ENCODE measurements at regions of chr1 and their contacts with region 1.

Region 1: DNA sequence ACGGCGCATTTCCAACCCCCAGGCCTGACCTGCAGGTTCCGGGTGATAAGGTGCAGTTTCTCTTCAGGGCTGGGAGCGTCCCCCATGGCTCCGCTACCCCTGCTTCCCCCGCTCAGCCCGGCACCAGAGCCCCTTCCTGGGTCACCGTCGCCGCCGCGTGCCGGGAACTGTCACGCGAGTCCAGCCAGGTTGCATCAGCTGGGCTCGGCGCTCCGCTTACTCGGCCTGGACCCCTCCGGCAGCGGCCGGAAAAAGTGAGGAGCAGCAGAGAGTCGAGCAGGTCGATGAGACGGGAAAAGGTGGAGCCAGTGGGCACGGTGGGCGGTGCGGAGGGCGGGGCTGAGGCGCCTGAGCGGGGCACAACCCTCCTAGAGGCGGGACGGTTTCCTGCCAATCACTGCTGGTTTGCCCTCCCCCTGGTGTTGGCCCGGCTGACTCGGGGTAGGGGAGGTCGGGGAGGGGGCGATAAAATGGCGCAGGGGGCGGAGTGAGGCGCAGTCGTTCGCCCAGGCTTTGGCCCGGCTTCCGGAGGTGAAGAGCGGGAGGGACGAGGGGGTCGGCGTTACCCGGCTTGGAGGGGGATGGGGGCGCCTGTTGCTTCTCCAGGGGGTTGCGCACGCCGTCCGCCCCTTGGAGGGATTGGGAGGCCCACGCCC is at the starts of genes S100PBP and YARS1:
- DNase-seq: peak; percentile 95
- ATAC-seq: peak; percentile 91
- H3K4me3 ChIP-seq: peak within 1 kb of the TSS; percentile 83 to 100 (median 97)
- H3K27ac ChIP-seq: peak within 1 kb of the TSS; percentile 93
- H3K4me1 ChIP-seq: peaks cover 45% of the 10 kb centered on the region
- H3K27me3 ChIP-seq: peaks cover 0 to 5% of the 10 kb centered on the region in 2 experiments; a peak in 1 of 5 replicates
- CTCF ChIP-seq: no peak
- EP300 ChIP-seq: peak; percentile 54 to 72; a peak in 3 of 4 replicates
- POLR2A ChIP-seq: peak; percentile 59 to 63
- RAD21 ChIP-seq: peak; percentile 32; the same call in 1 of the 2 replicates
- total RNA-seq, gene S100PBP: 26.1 and 28.4 TPM in 2 replicates
- total RNA-seq, gene YARS1: 102 and 113 TPM in 2 replicates

Region 2: DNA sequence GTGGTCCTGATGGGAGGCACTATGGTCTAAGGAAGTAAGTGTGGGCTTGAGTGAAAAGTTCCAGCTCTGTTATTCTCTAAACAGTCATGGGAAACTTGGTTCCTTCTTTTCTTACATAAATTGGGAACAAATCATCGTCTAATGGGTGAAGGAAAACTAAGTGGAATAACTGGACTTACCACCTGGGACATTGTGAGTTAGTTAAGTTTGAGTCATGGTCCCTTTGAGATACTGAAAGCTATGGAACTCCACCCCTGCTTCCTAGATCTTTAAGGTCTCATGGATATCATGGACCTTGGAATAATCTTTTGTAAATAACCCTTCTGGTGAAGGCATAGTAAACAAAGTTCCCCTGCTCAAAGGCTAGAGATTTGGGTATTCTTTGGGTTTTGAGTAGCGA is 653.9 kb before region 1 on chr1:
- CTCF ChIA-PET with region 1: no interaction called
- POLR2A ChIA-PET with region 1: no interaction called
- in situ Hi-C with region 1: no loop called
- intact Hi-C with region 1: no loop called
- DNase-seq: no peak
- ATAC-seq: no peak
- H3K4me3 ChIP-seq: no peak overlapping the region
- H3K27ac ChIP-seq: no peak overlapping the region
- H3K4me1 ChIP-seq: no peaks in the 10 kb centered on the region
- H3K27me3 ChIP-seq: no peaks in the 10 kb centered on the region
- CTCF ChIP-seq: no peak
- EP300 ChIP-seq: no peak
- POLR2A ChIP-seq: no peak
- RAD21 ChIP-seq: no peak

Region 3: DNA sequence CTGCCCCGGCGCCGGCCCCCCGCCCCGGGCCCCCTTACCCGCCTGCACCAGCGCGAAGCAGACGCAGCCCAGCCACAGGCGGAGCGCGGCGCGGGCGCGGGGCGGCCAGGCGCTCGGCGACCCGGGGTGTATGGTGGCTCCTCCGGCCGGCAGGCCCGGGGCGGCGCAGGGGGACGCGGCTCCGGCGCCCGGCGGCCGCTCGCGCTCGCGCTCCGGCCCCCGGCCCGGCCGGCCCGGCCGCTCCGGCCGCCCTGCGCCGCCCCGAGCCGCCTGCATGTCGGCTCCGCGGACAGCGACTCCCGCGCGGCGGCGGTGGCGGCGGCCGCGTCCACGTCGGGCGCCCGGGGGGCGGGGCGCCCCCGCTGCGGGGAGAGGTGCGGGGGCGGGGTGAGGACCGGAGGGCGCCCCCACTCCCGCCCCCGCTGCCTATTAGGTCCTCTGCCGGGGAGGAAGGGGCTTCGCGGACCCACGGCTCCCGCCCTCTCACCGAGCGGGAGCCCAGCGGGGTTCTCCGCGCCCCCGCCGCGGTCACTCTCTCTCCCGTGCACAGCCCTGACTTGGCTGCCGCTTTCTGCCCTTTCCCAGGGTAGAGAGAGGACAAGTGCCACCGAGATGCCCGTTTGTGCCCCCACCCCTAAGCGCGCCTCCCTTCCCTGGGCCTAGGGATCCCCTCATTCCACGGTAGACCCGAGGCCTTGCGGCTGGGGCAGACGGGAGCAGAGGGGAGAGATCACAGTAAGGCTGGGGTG is 53.5 kb after region 1 on chr1 and contains the start of gene FNDC5:
- CTCF ChIA-PET with region 1: interaction called, 3 read pairs
- POLR2A ChIA-PET with region 1: no interaction called
- in situ Hi-C with region 1: loop called (anchors 10 kb)
- intact Hi-C with region 1: loop called (anchors 5 kb)
- DNase-seq: no peak
- ATAC-seq: peak; percentile 67
- H3K4me3 ChIP-seq: peak within 1 kb of the TSS; percentile 58 to 78 (median 59)
- H3K27ac ChIP-seq: no peak within 1 kb of the TSS
- H3K4me1 ChIP-seq: peaks cover 26% of the 10 kb centered on the region
- H3K27me3 ChIP-seq: peaks cover 0 to 19% of the 10 kb centered on the region in 2 experiments; a peak in 3 of 5 replicates
- CTCF ChIP-seq: no peak
- EP300 ChIP-seq: no peak
- POLR2A ChIP-seq: no peak
- RAD21 ChIP-seq: no peak
- total RNA-seq, gene FNDC5: 1.6 and 3.1 TPM in 2 replicates

Measured in HepG2 (cell line).